ENCODE measurements at regions of chr12 and their contacts with region 1.

Region 1: GRCh38 chr12:42482445-42483237 is 106.9 kb downstream of the PRICKLE1 start:
- DNase-seq: no peak
- H3K4me3 ChIP-seq: peak overlapping the region; percentile 56 to 78 (median 64)
- H3K27ac ChIP-seq: peak overlapping the region; percentile 55 to 84 (median 80)
- H3K4me1 ChIP-seq: peaks cover 0 to 35% (median 6%) of the 10 kb centered on the region in 3 donors
- H3K27me3 ChIP-seq: peaks cover 0 to 29% (median 0%) of the 10 kb centered on the region in 4 donors
- CTCF ChIP-seq: peak; percentile 73 to 96 (median 87)
- POLR2A ChIP-seq: no peak

Region 2: GRCh38 chr12:42617622-42618021 is 135.0 kb after region 1 on chr12:
- intact Hi-C with region 1: no loop called
- DNase-seq: no peak
- H3K4me3 ChIP-seq: no peak overlapping the region
- H3K27ac ChIP-seq: no peak overlapping the region
- H3K4me1 ChIP-seq: no peaks in the 10 kb centered on the region
- H3K27me3 ChIP-seq: no peaks in the 10 kb centered on the region
- CTCF ChIP-seq: no peak
- POLR2A ChIP-seq: no peak

Region 3: DNA sequence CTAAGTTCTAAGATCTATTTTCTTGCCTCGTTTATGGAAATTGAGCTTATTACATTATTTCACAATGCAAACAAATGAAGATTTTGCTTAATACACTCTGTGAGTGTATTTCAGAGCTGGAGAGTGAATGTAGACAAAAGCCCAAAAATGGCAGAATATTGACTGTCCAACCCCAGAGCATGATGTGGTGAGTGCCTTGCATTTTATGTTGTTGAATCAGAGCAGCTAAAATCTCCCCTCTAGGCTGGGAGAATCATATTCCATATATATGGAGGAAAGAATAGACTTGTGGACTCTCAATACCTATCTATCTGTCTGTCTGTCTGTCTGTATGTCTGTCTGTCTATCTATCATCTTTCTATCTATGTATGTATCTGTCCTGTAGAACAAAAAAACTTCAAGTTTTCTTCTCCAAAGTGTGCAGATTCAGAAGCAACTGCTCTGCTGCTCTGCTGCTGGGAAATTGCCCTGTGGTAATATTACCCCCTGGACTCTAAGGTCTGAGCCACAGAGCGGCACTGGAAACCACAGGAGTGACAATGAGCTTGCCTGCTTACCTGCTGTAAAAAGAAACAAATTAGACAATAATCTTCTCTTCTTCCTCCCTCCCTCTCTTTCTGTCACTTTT is 316.3 kb after region 1 on chr12:
- intact Hi-C with region 1: no loop called
- DNase-seq: no peak
- H3K4me3 ChIP-seq: no peak overlapping the region
- H3K27ac ChIP-seq: no peak overlapping the region
- H3K4me1 ChIP-seq: no peaks in the 10 kb centered on the region
- H3K27me3 ChIP-seq: no peaks in the 10 kb centered on the region
- CTCF ChIP-seq: no peak
- POLR2A ChIP-seq: no peak

Region 4: GRCh38 chr12:43338848-43339526 is 856.3 kb after region 1 on chr12:
- intact Hi-C with region 1: loop called (anchors 10 kb)
- DNase-seq: no peak
- H3K4me3 ChIP-seq: no peak overlapping the region
- H3K27ac ChIP-seq: no peak overlapping the region
- H3K4me1 ChIP-seq: peaks cover 0 to 6% (median 0%) of the 10 kb centered on the region in 3 donors
- H3K27me3 ChIP-seq: no peaks in the 10 kb centered on the region
- CTCF ChIP-seq: peak in 3 of 6 experiments; percentile 28 to 31 (median 30)
- POLR2A ChIP-seq: no peak